HCT116 (cell line): ENCODE measurements at regions of chr1 and their contacts with region 1.

Region 1: GRCh38 chr1:154669464-154670282 is 61.7 kb upstream of the ADAR start:
- DNase-seq: peak; percentile 67
- ATAC-seq: peak; percentile 100
- H3K4me3 ChIP-seq: no peak overlapping the region
- H3K27ac ChIP-seq: no peak overlapping the region
- H3K4me1 ChIP-seq: peaks cover 0 to 3% of the 10 kb centered on the region in 2 experiments; a peak in 1 of 4 replicates
- H3K27me3 ChIP-seq: no peaks in the 10 kb centered on the region
- CTCF ChIP-seq: peak; percentile 86 to 95 (median 93)
- POLR2A ChIP-seq: no peak
- RAD21 ChIP-seq: peak; percentile 98

Region 2: GRCh38 chr1:154335025-154335714 is 334.5 kb before region 1 on chr1:
- CTCF ChIA-PET with region 1: no interaction called
- POLR2A ChIA-PET with region 1: no interaction called
- RAD21 ChIA-PET with region 1: no interaction called
- intact Hi-C with region 1: no loop called
- DNase-seq: no peak
- ATAC-seq: peak; percentile 92
- H3K4me3 ChIP-seq: no peak overlapping the region
- H3K27ac ChIP-seq: no peak overlapping the region
- H3K4me1 ChIP-seq: peaks cover 0 to 4% of the 10 kb centered on the region in 2 experiments; a peak in 1 of 4 replicates
- H3K27me3 ChIP-seq: no peaks in the 10 kb centered on the region
- CTCF ChIP-seq: peak; percentile 82 to 87 (median 82); a peak in 5 of 6 replicates
- POLR2A ChIP-seq: no peak
- RAD21 ChIP-seq: peak; percentile 84

Region 3: GRCh38 chr1:154747740-154748404 is 78.2 kb after region 1 on chr1:
- CTCF ChIA-PET with region 1: interaction called, 7 read pairs
- POLR2A ChIA-PET with region 1: interaction called, 3 read pairs
- RAD21 ChIA-PET with region 1: interaction called in 1 of 2 experiments, 3 read pairs
- intact Hi-C with region 1: loop called (anchors 1 kb)
- DNase-seq: no peak
- ATAC-seq: no peak
- H3K4me3 ChIP-seq: no peak overlapping the region
- H3K27ac ChIP-seq: no peak overlapping the region
- H3K4me1 ChIP-seq: peaks cover 0 to 8% of the 10 kb centered on the region in 2 experiments; a peak in 1 of 4 replicates
- H3K27me3 ChIP-seq: peaks cover 3% of the 10 kb centered on the region; the same call in 1 of the 2 replicates
- CTCF ChIP-seq: no peak
- POLR2A ChIP-seq: no peak
- RAD21 ChIP-seq: no peak

Region 4: GRCh38 chr1:154760469-154760933 is 90.8 kb after region 1 on chr1:
- CTCF ChIA-PET with region 1: interaction called, 6 read pairs
- POLR2A ChIA-PET with region 1: no interaction called
- RAD21 ChIA-PET with region 1: interaction called in 1 of 2 experiments, 3 read pairs
- intact Hi-C with region 1: loop called (anchors 1 kb)
- DNase-seq: peak; percentile 28
- ATAC-seq: peak; percentile 99
- H3K4me3 ChIP-seq: peak overlapping the region; percentile 17 to 42
- H3K27ac ChIP-seq: no peak overlapping the region
- H3K4me1 ChIP-seq: peaks cover 4 to 10% of the 10 kb centered on the region in 2 experiments; a peak in 3 of 4 replicates
- H3K27me3 ChIP-seq: peaks cover 17% of the 10 kb centered on the region
- CTCF ChIP-seq: peak; percentile 71 to 85 (median 74)
- POLR2A ChIP-seq: no peak
- RAD21 ChIP-seq: peak; percentile 66

Region 5: GRCh38 chr1:155063550-155064110 is 394.0 kb after region 1 on chr1 and contains the start of gene EFNA4:
- CTCF ChIA-PET with region 1: no interaction called
- POLR2A ChIA-PET with region 1: no interaction called
- RAD21 ChIA-PET with region 1: no interaction called
- intact Hi-C with region 1: loop called (anchors 5 kb)
- DNase-seq: peak; percentile 79
- ATAC-seq: peak; percentile 79
- H3K4me3 ChIP-seq: peak within 1 kb of the TSS; percentile 77 to 84
- H3K27ac ChIP-seq: peak within 1 kb of the TSS; percentile 93
- H3K4me1 ChIP-seq: peaks cover 21 to 35% of the 10 kb centered on the region in 2 experiments
- H3K27me3 ChIP-seq: no peaks in the 10 kb centered on the region
- CTCF ChIP-seq: no peak
- POLR2A ChIP-seq: peak; percentile 76
- RAD21 ChIP-seq: no peak
- total RNA-seq, gene EFNA4: 9.8 TPM